ENCODE measurements at regions of chr12 and their contacts with region 1.

Region 1: GRCh38 chr12:990661-991349 is at the start of gene ERC1:
- DNase-seq: peak; percentile 82 to 93
- H3K4me3 ChIP-seq: peak within 1 kb of the TSS; percentile 98
- H3K27ac ChIP-seq: peak within 1 kb of the TSS; percentile 98 to 99
- H3K4me1 ChIP-seq: peaks cover 0 to 39% (median 27%) of the 10 kb centered on the region in 4 donors
- H3K27me3 ChIP-seq: no peaks in the 10 kb centered on the region
- CTCF ChIP-seq: no peak

Region 2: DNA sequence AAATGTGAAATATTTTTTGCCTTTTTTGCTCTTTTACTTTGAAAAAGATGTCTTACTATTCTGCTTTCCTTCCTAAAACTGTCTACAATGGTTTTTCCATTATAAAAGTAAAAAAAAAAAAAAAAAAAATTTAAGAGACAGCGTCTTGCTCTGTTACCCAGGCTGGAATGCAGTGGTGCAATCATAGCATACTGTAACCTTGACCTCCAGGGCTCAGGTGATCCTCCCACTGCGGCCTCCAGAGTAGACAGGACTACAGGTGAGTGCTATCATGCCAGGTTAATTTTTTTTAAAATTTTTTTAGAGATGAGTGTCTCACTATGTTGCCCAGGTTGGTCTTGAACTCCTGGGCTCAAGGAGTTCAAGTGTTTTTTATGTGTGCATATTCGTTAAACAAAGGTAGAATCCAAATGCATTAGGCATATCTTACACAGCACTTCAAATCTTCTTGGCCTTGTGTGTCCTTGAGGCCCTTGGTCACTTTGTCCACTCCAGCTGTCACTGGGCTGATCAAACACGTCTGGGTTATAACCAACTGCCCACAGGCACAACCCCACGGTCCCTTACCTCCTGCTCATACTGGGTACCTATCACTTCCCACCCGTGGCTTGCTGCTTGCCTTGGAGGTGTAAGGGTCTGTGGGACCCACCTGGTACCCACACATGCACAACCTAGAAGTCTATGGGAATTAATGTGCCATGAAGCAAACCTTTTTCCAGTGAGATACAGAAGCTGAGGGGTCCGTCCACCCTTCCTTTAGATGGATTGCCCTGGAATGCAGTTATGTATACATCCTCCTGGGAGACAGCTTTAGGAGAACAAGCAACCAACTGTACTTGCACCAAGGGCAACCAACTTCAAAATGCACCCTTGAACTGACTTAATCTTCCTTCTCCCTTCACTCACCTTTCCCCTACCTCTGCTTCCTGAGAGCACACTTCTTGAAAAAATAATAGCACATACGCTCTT is 54.1 kb before region 1 on chr12:
- intact Hi-C with region 1: no loop called
- DNase-seq: no peak
- H3K4me3 ChIP-seq: no peak overlapping the region
- H3K27ac ChIP-seq: no peak overlapping the region
- H3K4me1 ChIP-seq: no peaks in the 10 kb centered on the region
- H3K27me3 ChIP-seq: no peaks in the 10 kb centered on the region
- CTCF ChIP-seq: no peak

Region 3: GRCh38 chr12:1594261-1595025 is 603.6 kb after region 1 on chr12 and contains the start of gene FBXL14:
- intact Hi-C with region 1: loop called (anchors 10 kb)
- DNase-seq: peak; percentile 87 to 93
- H3K4me3 ChIP-seq: peak within 1 kb of the TSS; percentile 84 to 96
- H3K27ac ChIP-seq: peak within 1 kb of the TSS; percentile 89 to 93
- H3K4me1 ChIP-seq: peaks cover 0 to 49% (median 27%) of the 10 kb centered on the region in 4 donors
- H3K27me3 ChIP-seq: no peaks in the 10 kb centered on the region
- CTCF ChIP-seq: peak in 1 of 2 experiments; percentile 9

Measured in tibial artery (tissue), 4 donors.